CD4-positive, alpha-beta memory T cell (primary cell): ENCODE measurements at regions of chr4 and their contacts with region 1.

Region 1: GRCh38 chr4:56799824-56800756 is 21.4 kb downstream of the SPINK2 start:
- DNase-seq: peak; percentile 75 to 82 (median 82)
- H3K4me3 ChIP-seq: peak overlapping the region; percentile 72 to 75
- H3K4me3 Mint-ChIP-seq: peak overlapping the region; percentile 91 to 100 (median 94)
- H3K27ac ChIP-seq: peak overlapping the region; percentile 59
- H3K27ac Mint-ChIP-seq: peak overlapping the region; percentile 55 to 97 (median 91)
- H3K4me1 ChIP-seq: peaks cover 18% of the 10 kb centered on the region
- H3K4me1 Mint-ChIP-seq: peaks cover 8 to 29% (median 17%) of the 10 kb centered on the region in 4 donors
- H3K27me3 ChIP-seq: no peaks in the 10 kb centered on the region
- H3K27me3 Mint-ChIP-seq: peaks cover 0 to 3% of the 10 kb centered on the region in 2 donors

Region 2: GRCh38 chr4:56544573-56545131 is 255.4 kb before region 1 on chr4:
- CTCF ChIA-PET with region 1: interaction called, 4 read pairs
- POLR2A ChIA-PET with region 1: no interaction called
- intact Hi-C with region 1: loop called (anchors 1 kb)
- DNase-seq: peak; percentile 69 to 83 (median 78)
- H3K4me3 ChIP-seq: peak overlapping the region; percentile 37 to 42
- H3K4me3 Mint-ChIP-seq: peak overlapping the region; percentile 43 to 77 (median 64)
- H3K27ac ChIP-seq: no peak overlapping the region
- H3K27ac Mint-ChIP-seq: peak overlapping the region in 6 of 7 donors; percentile 7 to 79 (median 22)
- H3K4me1 ChIP-seq: peaks cover 13% of the 10 kb centered on the region
- H3K4me1 Mint-ChIP-seq: peaks cover 8 to 19% (median 8%) of the 10 kb centered on the region in 4 donors
- H3K27me3 ChIP-seq: no peaks in the 10 kb centered on the region
- H3K27me3 Mint-ChIP-seq: peaks cover 4% of the 10 kb centered on the region in 2 donors

Region 3: GRCh38 chr4:56626963-56627362 is 173.1 kb before region 1 on chr4:
- CTCF ChIA-PET with region 1: interaction called, 12 read pairs
- POLR2A ChIA-PET with region 1: no interaction called
- intact Hi-C with region 1: no loop called
- DNase-seq: peak in 3 of 5 donors; percentile 7 to 17 (median 8)
- H3K4me3 ChIP-seq: no peak overlapping the region
- H3K4me3 Mint-ChIP-seq: no peak overlapping the region
- H3K27ac ChIP-seq: no peak overlapping the region
- H3K27ac Mint-ChIP-seq: no peak overlapping the region
- H3K4me1 ChIP-seq: no peaks in the 10 kb centered on the region
- H3K4me1 Mint-ChIP-seq: peaks cover 0 to 5% (median 2%) of the 10 kb centered on the region in 4 donors
- H3K27me3 ChIP-seq: no peaks in the 10 kb centered on the region
- H3K27me3 Mint-ChIP-seq: peaks cover 0 to 2% of the 10 kb centered on the region in 2 donors

Region 4: DNA sequence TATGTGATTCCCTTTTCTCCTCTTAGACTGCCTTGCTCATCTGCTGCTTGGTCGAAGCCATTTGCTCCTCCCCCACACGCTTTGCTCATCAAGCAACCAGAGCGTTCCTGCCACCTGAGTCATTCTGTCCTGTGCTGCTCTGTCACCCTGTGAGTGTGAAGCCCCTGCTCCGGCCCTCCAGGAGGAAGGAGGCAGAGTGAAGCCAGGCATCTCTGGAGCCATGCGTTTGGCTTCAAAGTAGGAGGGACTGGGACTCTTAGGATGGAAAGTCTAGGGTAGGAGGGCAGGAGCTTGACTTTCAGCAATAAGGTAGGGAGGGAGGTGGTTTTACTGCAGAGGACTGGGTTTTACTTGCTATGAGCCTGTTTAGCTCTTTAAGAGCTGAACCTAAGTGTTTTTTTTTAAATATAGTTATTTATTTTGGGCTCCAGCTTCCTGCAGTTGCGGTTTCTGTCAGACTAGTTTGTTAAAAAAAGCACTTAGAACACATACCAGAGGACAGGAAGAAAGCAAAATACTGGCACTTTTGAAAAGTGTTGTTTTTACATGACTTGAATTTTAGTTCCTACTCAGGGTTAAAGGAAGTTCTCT is 42.2 kb before region 1 on chr4:
- CTCF ChIA-PET with region 1: interaction called, 18 read pairs
- POLR2A ChIA-PET with region 1: interaction called, 6 read pairs
- intact Hi-C with region 1: loop called (anchors 1 kb)
- DNase-seq: peak; percentile 59 to 70 (median 69)
- H3K4me3 ChIP-seq: peak overlapping the region in 1 of 2 donors; percentile 18
- H3K4me3 Mint-ChIP-seq: peak overlapping the region; percentile 72 to 94 (median 85)
- H3K27ac ChIP-seq: peak overlapping the region; percentile 48
- H3K27ac Mint-ChIP-seq: peak overlapping the region; percentile 72 to 98 (median 94)
- H3K4me1 ChIP-seq: peaks cover 49% of the 10 kb centered on the region
- H3K4me1 Mint-ChIP-seq: peaks cover 38 to 73% (median 45%) of the 10 kb centered on the region in 4 donors
- H3K27me3 ChIP-seq: no peaks in the 10 kb centered on the region
- H3K27me3 Mint-ChIP-seq: no peaks in the 10 kb centered on the region

Region 5: DNA sequence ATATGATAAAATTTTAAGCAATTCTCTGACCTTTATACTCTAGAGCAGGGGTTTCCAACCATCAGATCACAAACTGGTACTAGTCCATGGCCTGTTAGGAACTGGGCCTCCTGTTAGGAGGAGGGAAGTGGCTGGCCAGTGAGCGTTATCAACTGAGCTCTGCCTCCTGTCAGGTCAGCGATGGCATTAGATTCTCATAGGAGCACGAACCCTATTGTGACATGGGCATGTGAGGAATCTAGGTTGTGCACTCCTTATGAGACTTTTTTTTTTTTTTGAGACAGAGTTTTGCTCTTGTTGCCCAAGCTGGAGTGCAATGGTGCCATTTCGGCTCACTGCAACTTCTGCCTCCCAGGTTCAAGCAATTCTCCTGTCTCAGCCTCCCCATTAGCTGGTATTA is 13.3 kb after region 1 on chr4:
- CTCF ChIA-PET with region 1: no interaction called
- POLR2A ChIA-PET with region 1: no interaction called
- intact Hi-C with region 1: no loop called
- DNase-seq: no peak
- H3K4me3 ChIP-seq: no peak overlapping the region
- H3K4me3 Mint-ChIP-seq: no peak overlapping the region
- H3K27ac ChIP-seq: no peak overlapping the region
- H3K27ac Mint-ChIP-seq: no peak overlapping the region
- H3K4me1 ChIP-seq: peaks cover 13% of the 10 kb centered on the region
- H3K4me1 Mint-ChIP-seq: peaks cover 7 to 13% (median 9%) of the 10 kb centered on the region in 4 donors
- H3K27me3 ChIP-seq: no peaks in the 10 kb centered on the region
- H3K27me3 Mint-ChIP-seq: peaks cover 2% of the 10 kb centered on the region in 2 donors

Region 6: DNA sequence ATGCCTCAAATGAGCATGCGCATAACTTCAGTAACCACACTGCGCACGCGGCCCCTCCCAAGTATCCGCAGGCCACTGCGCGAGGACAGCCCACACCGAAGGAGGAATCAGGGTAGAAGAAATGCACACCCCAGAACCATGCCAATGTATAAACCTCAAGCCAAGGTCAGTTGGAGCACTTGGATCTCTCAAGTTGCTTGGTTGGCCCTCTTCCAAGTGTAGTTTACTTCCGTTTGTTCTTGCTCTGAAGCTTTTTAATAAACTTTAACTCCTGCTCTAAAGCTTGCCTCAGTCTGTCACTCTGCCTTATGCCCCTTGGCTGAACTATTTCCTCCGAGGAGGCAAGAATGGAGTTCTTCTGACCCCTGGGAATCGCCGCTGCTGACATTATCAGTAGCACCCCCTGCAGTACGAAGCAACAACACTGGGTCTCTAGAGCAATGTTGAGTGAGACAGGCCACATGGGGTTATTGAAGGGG is 43.4 kb after region 1 on chr4:
- CTCF ChIA-PET with region 1: interaction called, 32 read pairs
- POLR2A ChIA-PET with region 1: no interaction called
- intact Hi-C with region 1: no loop called
- DNase-seq: no peak
- H3K4me3 ChIP-seq: no peak overlapping the region
- H3K4me3 Mint-ChIP-seq: no peak overlapping the region
- H3K27ac ChIP-seq: no peak overlapping the region
- H3K27ac Mint-ChIP-seq: no peak overlapping the region
- H3K4me1 ChIP-seq: no peaks in the 10 kb centered on the region
- H3K4me1 Mint-ChIP-seq: no peaks in the 10 kb centered on the region
- H3K27me3 ChIP-seq: no peaks in the 10 kb centered on the region
- H3K27me3 Mint-ChIP-seq: peaks cover 0 to 2% of the 10 kb centered on the region in 2 donors

Region 7: GRCh38 chr4:57214654-57215411 is 414.7 kb after region 1 on chr4:
- CTCF ChIA-PET with region 1: no interaction called
- POLR2A ChIA-PET with region 1: no interaction called
- intact Hi-C with region 1: no loop called
- DNase-seq: no peak
- H3K4me3 ChIP-seq: no peak overlapping the region
- H3K4me3 Mint-ChIP-seq: no peak overlapping the region
- H3K27ac ChIP-seq: no peak overlapping the region
- H3K27ac Mint-ChIP-seq: no peak overlapping the region
- H3K4me1 ChIP-seq: no peaks in the 10 kb centered on the region
- H3K4me1 Mint-ChIP-seq: no peaks in the 10 kb centered on the region
- H3K27me3 ChIP-seq: no peaks in the 10 kb centered on the region
- H3K27me3 Mint-ChIP-seq: peaks cover under 1 to 1% of the 10 kb centered on the region in 2 donors

Region 8: GRCh38 chr4:57661517-57662090 is 861.5 kb after region 1 on chr4:
- CTCF ChIA-PET with region 1: no interaction called
- POLR2A ChIA-PET with region 1: no interaction called
- intact Hi-C with region 1: no loop called
- DNase-seq: no peak
- H3K4me3 ChIP-seq: no peak overlapping the region
- H3K4me3 Mint-ChIP-seq: no peak overlapping the region
- H3K27ac ChIP-seq: no peak overlapping the region
- H3K27ac Mint-ChIP-seq: no peak overlapping the region
- H3K4me1 ChIP-seq: no peaks in the 10 kb centered on the region
- H3K4me1 Mint-ChIP-seq: no peaks in the 10 kb centered on the region
- H3K27me3 ChIP-seq: no peaks in the 10 kb centered on the region
- H3K27me3 Mint-ChIP-seq: no peaks in the 10 kb centered on the region